ENCODE measurements at regions of chr2 and their contacts with region 1.

Region 1: GRCh38 chr2:64203858-64204632 is 59.8 kb upstream of the PELI1 start:
- DNase-seq: no peak
- H3K4me3 ChIP-seq: peak overlapping the region in 3 of 4 donors; percentile 27 to 56 (median 32)
- H3K27ac ChIP-seq: peak overlapping the region; percentile 71 to 95 (median 92)
- H3K4me1 ChIP-seq: peaks cover 22 to 42% (median 27%) of the 10 kb centered on the region in 3 donors
- H3K27me3 ChIP-seq: no peaks in the 10 kb centered on the region
- CTCF ChIP-seq: no peak
- POLR2A ChIP-seq: peak in 1 of 4 donors; percentile 22

Region 2: GRCh38 chr2:64086347-64087082 is 117.5 kb before region 1 on chr2:
- intact Hi-C with region 1: no loop called
- DNase-seq: no peak
- H3K4me3 ChIP-seq: no peak overlapping the region
- H3K27ac ChIP-seq: no peak overlapping the region
- H3K4me1 ChIP-seq: peaks cover 0 to under 1% (median 0%) of the 10 kb centered on the region in 3 donors
- H3K27me3 ChIP-seq: no peaks in the 10 kb centered on the region
- CTCF ChIP-seq: no peak
- POLR2A ChIP-seq: no peak

Region 3: GRCh38 chr2:64144057-64145013 is 59.7 kb before region 1 on chr2 and contains the start of gene PELI1:
- intact Hi-C with region 1: loop called (anchors 10 kb)
- DNase-seq: peak; percentile 83
- H3K4me3 ChIP-seq: peak within 1 kb of the TSS; percentile 90 to 98 (median 97)
- H3K27ac ChIP-seq: peak within 1 kb of the TSS; percentile 99 to 100 (median 99)
- H3K4me1 ChIP-seq: peaks cover 0 to 40% (median 5%) of the 10 kb centered on the region in 3 donors
- H3K27me3 ChIP-seq: no peaks in the 10 kb centered on the region
- CTCF ChIP-seq: peak in 2 of 6 experiments; percentile 15 to 19
- POLR2A ChIP-seq: peak; percentile 34 to 100 (median 96)
- total RNA-seq, gene PELI1: 23.7 to 40.4 (median 34.5) TPM

Measured in esophagus squamous epithelium (tissue), 5 donors.